ENCODE measurements at regions of chr7 and their contacts with region 1.

Region 1: DNA sequence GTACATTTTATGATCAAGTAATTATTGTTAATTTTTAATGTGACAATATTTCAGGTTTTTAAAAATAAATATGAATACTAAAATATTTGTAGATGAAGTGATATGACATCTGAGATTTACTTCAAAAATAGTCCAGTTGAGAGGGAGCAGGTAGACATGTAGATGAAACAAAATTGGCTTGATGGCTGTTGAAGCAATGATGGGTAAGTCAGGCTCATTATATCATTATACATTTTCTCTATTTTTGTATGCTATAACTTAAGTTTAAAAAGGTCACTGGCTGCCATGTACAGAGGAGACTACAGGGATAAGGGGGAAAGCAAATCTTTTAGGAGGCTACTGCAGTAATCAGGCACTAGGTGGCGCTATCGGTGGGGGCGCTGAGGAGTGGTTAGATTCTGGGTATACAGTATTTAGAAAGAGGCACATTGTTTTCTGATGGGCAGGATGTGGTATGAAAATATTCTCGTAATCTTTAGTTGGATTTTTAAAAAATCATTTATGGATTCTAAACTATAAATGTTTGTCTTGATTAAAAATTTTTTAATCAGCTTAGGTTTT is 189.8 kb upstream of the IMMP2L start:
- DNase-seq: peak; percentile 35 to 53 (median 45)
- H3K4me3 ChIP-seq: no peak overlapping the region
- H3K4me3 Mint-ChIP-seq: no peak overlapping the region
- H3K27ac ChIP-seq: no peak overlapping the region
- H3K27ac Mint-ChIP-seq: no peak overlapping the region
- H3K4me1 ChIP-seq: no peaks in the 10 kb centered on the region
- H3K4me1 Mint-ChIP-seq: no peaks in the 10 kb centered on the region
- H3K27me3 ChIP-seq: no peaks in the 10 kb centered on the region
- H3K27me3 Mint-ChIP-seq: peaks cover 6 to 9% of the 10 kb centered on the region in 2 donors

Region 2: GRCh38 chr7:111554086-111554485 is 198.0 kb before region 1 on chr7:
- CTCF ChIA-PET with region 1: no interaction called
- POLR2A ChIA-PET with region 1: no interaction called
- intact Hi-C with region 1: no loop called
- DNase-seq: no peak
- H3K4me3 ChIP-seq: no peak overlapping the region
- H3K4me3 Mint-ChIP-seq: no peak overlapping the region
- H3K27ac ChIP-seq: no peak overlapping the region
- H3K27ac Mint-ChIP-seq: no peak overlapping the region
- H3K4me1 ChIP-seq: peaks cover 3% of the 10 kb centered on the region
- H3K4me1 Mint-ChIP-seq: peaks cover 7 to 17% (median 15%) of the 10 kb centered on the region in 4 donors
- H3K27me3 ChIP-seq: no peaks in the 10 kb centered on the region
- H3K27me3 Mint-ChIP-seq: no peaks in the 10 kb centered on the region

Region 3: DNA sequence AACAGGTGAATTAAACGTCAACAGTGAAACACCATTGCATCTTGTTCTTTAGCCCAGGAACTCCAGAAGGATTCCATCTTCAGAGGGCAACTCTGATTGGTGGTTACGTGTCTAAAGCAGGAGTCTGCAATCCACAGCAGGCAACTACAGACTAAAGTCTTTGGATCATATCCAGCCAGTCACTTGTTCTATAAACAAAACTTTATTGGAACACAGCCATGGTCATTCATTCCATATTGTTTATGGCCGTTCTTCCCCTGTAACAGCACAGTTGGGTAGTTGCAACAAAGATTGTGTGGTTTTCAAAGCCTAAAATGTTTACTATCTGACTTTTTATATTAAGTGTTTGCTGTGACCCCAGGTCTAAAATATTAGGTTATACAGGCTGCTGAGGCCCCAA is 95.1 kb before region 1 on chr7:
- CTCF ChIA-PET with region 1: no interaction called
- POLR2A ChIA-PET with region 1: no interaction called
- intact Hi-C with region 1: no loop called
- DNase-seq: no peak
- H3K4me3 ChIP-seq: no peak overlapping the region
- H3K4me3 Mint-ChIP-seq: no peak overlapping the region
- H3K27ac ChIP-seq: no peak overlapping the region
- H3K27ac Mint-ChIP-seq: no peak overlapping the region
- H3K4me1 ChIP-seq: no peaks in the 10 kb centered on the region
- H3K4me1 Mint-ChIP-seq: peaks cover 0 to 1% (median 0%) of the 10 kb centered on the region in 4 donors
- H3K27me3 ChIP-seq: no peaks in the 10 kb centered on the region
- H3K27me3 Mint-ChIP-seq: peaks cover 3 to 9% of the 10 kb centered on the region in 2 donors

Region 4: GRCh38 chr7:111735661-111736551 is 16.2 kb before region 1 on chr7:
- CTCF ChIA-PET with region 1: interaction called, 20 read pairs
- POLR2A ChIA-PET with region 1: no interaction called
- intact Hi-C with region 1: no loop called
- DNase-seq: peak; percentile 42 to 62 (median 50)
- H3K4me3 ChIP-seq: no peak overlapping the region
- H3K4me3 Mint-ChIP-seq: no peak overlapping the region
- H3K27ac ChIP-seq: no peak overlapping the region
- H3K27ac Mint-ChIP-seq: no peak overlapping the region
- H3K4me1 ChIP-seq: no peaks in the 10 kb centered on the region
- H3K4me1 Mint-ChIP-seq: no peaks in the 10 kb centered on the region
- H3K27me3 ChIP-seq: no peaks in the 10 kb centered on the region
- H3K27me3 Mint-ChIP-seq: peaks cover 7 to 10% of the 10 kb centered on the region in 2 donors

Region 5: GRCh38 chr7:111835066-111835465 is 83.0 kb after region 1 on chr7:
- CTCF ChIA-PET with region 1: no interaction called
- POLR2A ChIA-PET with region 1: no interaction called
- intact Hi-C with region 1: no loop called
- DNase-seq: no peak
- H3K4me3 ChIP-seq: no peak overlapping the region
- H3K4me3 Mint-ChIP-seq: no peak overlapping the region
- H3K27ac ChIP-seq: no peak overlapping the region
- H3K27ac Mint-ChIP-seq: no peak overlapping the region
- H3K4me1 ChIP-seq: no peaks in the 10 kb centered on the region
- H3K4me1 Mint-ChIP-seq: no peaks in the 10 kb centered on the region
- H3K27me3 ChIP-seq: no peaks in the 10 kb centered on the region
- H3K27me3 Mint-ChIP-seq: peaks cover 0 to 3% of the 10 kb centered on the region in 2 donors

Region 6: GRCh38 chr7:111987115-111987826 is 235.2 kb after region 1 on chr7:
- CTCF ChIA-PET with region 1: no interaction called
- POLR2A ChIA-PET with region 1: no interaction called
- intact Hi-C with region 1: no loop called
- DNase-seq: no peak
- H3K4me3 ChIP-seq: no peak overlapping the region
- H3K4me3 Mint-ChIP-seq: no peak overlapping the region
- H3K27ac ChIP-seq: no peak overlapping the region
- H3K27ac Mint-ChIP-seq: no peak overlapping the region
- H3K4me1 ChIP-seq: no peaks in the 10 kb centered on the region
- H3K4me1 Mint-ChIP-seq: no peaks in the 10 kb centered on the region
- H3K27me3 ChIP-seq: no peaks in the 10 kb centered on the region
- H3K27me3 Mint-ChIP-seq: peaks cover 1 to 3% of the 10 kb centered on the region in 2 donors

Region 7: DNA sequence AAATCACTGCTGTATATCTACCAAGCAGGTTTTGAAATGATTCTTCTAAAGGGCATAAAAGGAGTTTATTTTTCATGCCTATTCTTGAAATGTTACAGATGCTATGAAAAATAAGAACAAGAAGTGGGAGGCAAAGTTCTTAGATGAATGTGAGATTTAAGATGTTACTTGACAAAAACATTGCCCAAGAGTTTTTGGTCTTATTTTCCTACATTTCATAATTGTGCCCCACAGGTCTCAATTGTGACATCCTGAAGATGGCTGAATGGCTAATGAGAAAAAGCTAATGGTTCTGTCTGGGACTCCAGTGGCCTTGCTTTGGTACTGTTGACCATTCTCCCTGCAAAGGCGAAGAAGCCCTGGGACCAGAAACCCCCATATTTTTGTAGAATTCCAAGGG is 655.2 kb after region 1 on chr7:
- CTCF ChIA-PET with region 1: interaction called, 10 read pairs
- POLR2A ChIA-PET with region 1: no interaction called
- intact Hi-C with region 1: no loop called
- DNase-seq: no peak
- H3K4me3 ChIP-seq: no peak overlapping the region
- H3K4me3 Mint-ChIP-seq: no peak overlapping the region
- H3K27ac ChIP-seq: no peak overlapping the region
- H3K27ac Mint-ChIP-seq: no peak overlapping the region
- H3K4me1 ChIP-seq: no peaks in the 10 kb centered on the region
- H3K4me1 Mint-ChIP-seq: no peaks in the 10 kb centered on the region
- H3K27me3 ChIP-seq: no peaks in the 10 kb centered on the region
- H3K27me3 Mint-ChIP-seq: peaks cover 1 to 19% of the 10 kb centered on the region in 2 donors

Region 8: GRCh38 chr7:112495810-112496462 is 743.8 kb after region 1 on chr7:
- CTCF ChIA-PET with region 1: interaction called, 6 read pairs
- POLR2A ChIA-PET with region 1: no interaction called
- intact Hi-C with region 1: loop called (anchors 1 kb)
- DNase-seq: peak in 4 of 5 donors; percentile 7 to 22 (median 20)
- H3K4me3 ChIP-seq: no peak overlapping the region
- H3K4me3 Mint-ChIP-seq: no peak overlapping the region
- H3K27ac ChIP-seq: no peak overlapping the region
- H3K27ac Mint-ChIP-seq: no peak overlapping the region
- H3K4me1 ChIP-seq: no peaks in the 10 kb centered on the region
- H3K4me1 Mint-ChIP-seq: peaks cover 0 to 2% (median 0%) of the 10 kb centered on the region in 4 donors
- H3K27me3 ChIP-seq: no peaks in the 10 kb centered on the region
- H3K27me3 Mint-ChIP-seq: peaks cover 1 to 3% of the 10 kb centered on the region in 2 donors

Measured in CD4-positive, alpha-beta memory T cell (primary cell).